ENCODE measurements at regions of chr2 and their contacts with region 1.

Region 1: GRCh38 chr2:28142386-28142785 is 250.3 kb upstream of the FOSL2 start:
- DNase-seq: no peak
- ATAC-seq: no peak
- H3K4me3 ChIP-seq: no peak overlapping the region
- H3K27ac ChIP-seq: peak overlapping the region in 1 of 2 experiments; percentile 15; a peak in 1 of 6 replicates
- H3K4me1 ChIP-seq: peaks cover 20% of the 10 kb centered on the region
- CTCF ChIP-seq: no peak
- EP300 ChIP-seq: no peak
- POLR2A ChIP-seq: no peak
- RAD21 ChIP-seq: no peak

Region 2: DNA sequence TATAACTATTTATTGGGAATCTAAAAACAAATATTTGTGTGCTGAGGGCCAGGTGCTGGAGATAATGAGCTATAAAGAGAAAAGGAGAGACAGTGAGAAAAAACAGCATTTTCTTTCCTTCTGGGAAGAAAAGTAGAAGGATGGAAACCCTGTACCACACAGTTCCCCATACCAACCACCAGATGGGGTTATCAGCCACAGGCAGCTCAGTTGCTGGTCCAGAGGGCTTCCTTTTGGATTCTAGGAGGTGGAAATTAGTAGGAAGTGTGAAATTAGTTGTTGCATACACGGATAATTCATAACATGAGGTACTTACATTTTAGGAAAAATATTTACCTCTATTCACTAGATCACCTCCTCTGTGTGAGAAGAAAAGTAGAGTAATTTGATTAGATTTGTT is 13.2 kb after region 1 on chr2:
- CTCF ChIA-PET with region 1: interaction called, 10 read pairs
- POLR2A ChIA-PET with region 1: no interaction called
- DNase-seq: peak; percentile 14 to 70
- ATAC-seq: no peak
- H3K4me3 ChIP-seq: no peak overlapping the region
- H3K27ac ChIP-seq: no peak overlapping the region
- H3K4me1 ChIP-seq: peaks cover 9% of the 10 kb centered on the region
- CTCF ChIP-seq: peak; percentile 45
- EP300 ChIP-seq: no peak
- POLR2A ChIP-seq: no peak
- RAD21 ChIP-seq: peak; percentile 33 to 72; a peak in 4 of 5 replicates

Region 3: DNA sequence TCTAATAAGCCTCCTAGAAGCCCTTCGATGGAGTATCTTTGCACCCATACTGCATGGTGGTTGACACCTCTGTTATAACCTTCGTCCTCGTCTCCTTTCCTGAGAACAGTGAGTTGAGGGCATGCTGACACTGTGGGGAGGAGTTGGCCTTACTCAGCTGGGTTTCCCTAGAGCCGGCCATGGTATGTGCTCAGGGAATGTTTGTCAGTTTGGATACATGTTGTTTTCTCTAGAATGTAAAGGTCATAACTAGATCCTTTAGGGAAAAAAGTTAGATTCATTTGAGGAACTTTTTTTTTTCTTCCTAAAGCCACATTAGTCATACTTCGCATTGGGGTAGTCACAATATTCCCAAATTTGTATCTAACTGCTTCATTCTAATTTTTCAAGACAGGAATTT is 144.3 kb after region 1 on chr2:
- CTCF ChIA-PET with region 1: no interaction called
- POLR2A ChIA-PET with region 1: no interaction called
- DNase-seq: no peak
- ATAC-seq: no peak; a peak in 1 of 6 replicates
- H3K4me3 ChIP-seq: no peak overlapping the region
- H3K27ac ChIP-seq: peak overlapping the region in 1 of 2 experiments; percentile 39; a peak in 3 of 6 replicates
- H3K4me1 ChIP-seq: peaks cover 19% of the 10 kb centered on the region
- CTCF ChIP-seq: no peak
- EP300 ChIP-seq: no peak
- POLR2A ChIP-seq: no peak
- RAD21 ChIP-seq: no peak

Measured in A549 (cell line).